ENCODE measurements at regions of chr3 and their contacts with region 1.

Region 1: DNA sequence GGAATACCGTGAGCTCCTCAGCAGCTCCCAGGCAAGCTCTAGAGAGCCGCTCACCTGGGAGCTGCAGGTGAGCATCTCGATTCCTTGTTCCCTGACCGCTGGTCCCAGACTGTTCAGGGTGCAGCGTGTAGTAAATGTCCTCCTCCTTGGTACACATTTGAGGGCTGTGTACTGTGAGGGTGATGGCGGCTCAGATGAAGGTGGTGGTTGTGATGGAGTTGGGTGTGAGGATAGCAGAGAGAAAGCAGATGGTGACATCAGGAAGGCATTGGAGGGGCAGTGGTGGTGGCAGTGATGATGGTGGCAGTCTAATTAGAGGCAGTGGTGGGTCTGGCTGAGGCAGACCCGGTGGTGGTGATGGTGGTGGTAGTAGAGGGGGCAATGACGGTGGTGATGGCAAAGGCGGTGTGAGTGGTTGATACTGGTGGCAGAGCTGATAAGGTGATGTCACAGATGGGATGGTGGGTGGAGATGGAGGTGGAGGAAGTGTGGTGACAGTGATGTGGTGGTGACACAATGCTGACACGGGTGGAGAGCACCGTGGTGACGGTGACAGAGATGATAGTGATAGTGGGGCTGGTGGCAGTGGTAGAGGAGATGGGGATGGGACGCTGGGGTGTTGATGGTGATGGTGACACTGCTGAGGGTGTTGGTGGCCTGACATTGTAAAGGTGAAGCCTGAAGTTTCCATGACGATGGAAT is at the start of gene DNAJB8:
- DNase-seq: peak; percentile 37
- ATAC-seq: peak; percentile 75
- H3K4me3 Mint-ChIP-seq: no peak within 1 kb of the TSS
- H3K27ac Mint-ChIP-seq: no peak within 1 kb of the TSS
- H3K4me1 Mint-ChIP-seq: peaks cover 7% of the 10 kb centered on the region
- H3K27me3 Mint-ChIP-seq: peaks cover 12% of the 10 kb centered on the region
- CTCF ChIP-seq: no peak
- total RNA-seq, gene DNAJB8: not detected

Region 2: GRCh38 chr3:128369864-128370642 is 96.9 kb before region 1 on chr3:
- CTCF ChIA-PET with region 1: no interaction called
- POLR2A ChIA-PET with region 1: no interaction called
- intact Hi-C with region 1: no loop called
- DNase-seq: no peak
- ATAC-seq: no peak
- H3K4me3 Mint-ChIP-seq: no peak overlapping the region
- H3K27ac Mint-ChIP-seq: no peak overlapping the region
- H3K4me1 Mint-ChIP-seq: peaks cover 5% of the 10 kb centered on the region
- H3K27me3 Mint-ChIP-seq: no peaks in the 10 kb centered on the region
- CTCF ChIP-seq: no peak

Region 3: GRCh38 chr3:128432971-128433704 is 33.9 kb before region 1 on chr3:
- CTCF ChIA-PET with region 1: no interaction called
- POLR2A ChIA-PET with region 1: no interaction called
- intact Hi-C with region 1: loop called (anchors 5 kb)
- DNase-seq: no peak
- ATAC-seq: peak; percentile 29
- H3K4me3 Mint-ChIP-seq: no peak overlapping the region
- H3K27ac Mint-ChIP-seq: no peak overlapping the region
- H3K4me1 Mint-ChIP-seq: peaks cover 6% of the 10 kb centered on the region
- H3K27me3 Mint-ChIP-seq: peaks cover 42% of the 10 kb centered on the region
- CTCF ChIP-seq: no peak

Measured in activated CD8-positive, alpha-beta T cell treated with anti-CD3 and anti-CD28 coated beads for 36 hours (primary cell).